ENCODE measurements at regions of chr6 and their contacts with region 1.

Region 1: DNA sequence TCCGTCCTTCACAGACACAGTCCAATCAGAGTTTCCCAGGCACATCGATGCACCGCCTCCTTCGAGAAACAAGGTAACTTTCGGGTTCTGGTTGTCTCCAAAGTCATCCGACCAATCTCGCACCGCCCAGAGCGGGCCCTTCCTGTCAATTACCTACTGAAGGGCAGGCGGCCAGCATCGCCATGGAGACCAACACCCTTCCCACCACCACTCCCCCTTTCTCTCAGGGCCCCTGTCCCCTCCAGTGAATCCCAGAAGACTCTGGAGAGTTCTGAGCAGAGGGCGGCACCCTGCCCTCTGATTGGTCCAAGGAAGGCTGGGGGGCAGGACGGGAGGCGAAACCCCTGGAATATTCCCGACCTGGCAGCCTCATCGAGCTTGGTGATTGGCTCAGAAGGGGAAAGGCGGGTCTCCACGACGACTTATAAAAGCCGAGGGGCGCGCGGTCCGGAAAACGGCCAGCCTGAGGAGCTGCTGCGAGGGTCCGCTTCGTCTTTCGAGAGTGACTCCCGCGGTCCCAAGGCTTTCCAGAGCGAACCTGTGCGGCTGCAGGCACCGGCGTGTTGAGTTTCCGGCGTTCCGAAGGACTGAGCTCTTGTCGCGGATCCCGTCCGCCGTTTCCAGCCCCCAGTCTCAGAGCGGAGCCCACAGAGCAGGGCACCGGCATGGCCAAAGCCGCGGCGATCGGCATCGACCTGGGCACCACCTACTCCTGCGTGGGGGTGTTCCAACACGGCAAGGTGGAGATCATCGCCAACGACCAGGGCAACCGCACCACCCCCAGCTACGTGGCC is at the start of gene HSPA1B:
- DNase-seq: peak; percentile 92
- ATAC-seq: peak; percentile 72
- H3K4me3 ChIP-seq: peak within 1 kb of the TSS; percentile 69 to 93 (median 80)
- H3K4me3 Mint-ChIP-seq: peak within 1 kb of the TSS; percentile 85
- H3K27ac ChIP-seq: peak within 1 kb of the TSS; percentile 87 to 89
- H3K27ac Mint-ChIP-seq: peak within 1 kb of the TSS; percentile 96
- H3K4me1 ChIP-seq: peaks cover 19 to 41% of the 10 kb centered on the region in 2 donors
- H3K4me1 Mint-ChIP-seq: peaks cover 32% of the 10 kb centered on the region
- H3K27me3 ChIP-seq: no peaks in the 10 kb centered on the region
- H3K27me3 Mint-ChIP-seq: no peaks in the 10 kb centered on the region
- CTCF ChIP-seq: no peak
- total RNA-seq, gene HSPA1B: 79.2 and 89.9 TPM in 2 replicates

Region 2: DNA sequence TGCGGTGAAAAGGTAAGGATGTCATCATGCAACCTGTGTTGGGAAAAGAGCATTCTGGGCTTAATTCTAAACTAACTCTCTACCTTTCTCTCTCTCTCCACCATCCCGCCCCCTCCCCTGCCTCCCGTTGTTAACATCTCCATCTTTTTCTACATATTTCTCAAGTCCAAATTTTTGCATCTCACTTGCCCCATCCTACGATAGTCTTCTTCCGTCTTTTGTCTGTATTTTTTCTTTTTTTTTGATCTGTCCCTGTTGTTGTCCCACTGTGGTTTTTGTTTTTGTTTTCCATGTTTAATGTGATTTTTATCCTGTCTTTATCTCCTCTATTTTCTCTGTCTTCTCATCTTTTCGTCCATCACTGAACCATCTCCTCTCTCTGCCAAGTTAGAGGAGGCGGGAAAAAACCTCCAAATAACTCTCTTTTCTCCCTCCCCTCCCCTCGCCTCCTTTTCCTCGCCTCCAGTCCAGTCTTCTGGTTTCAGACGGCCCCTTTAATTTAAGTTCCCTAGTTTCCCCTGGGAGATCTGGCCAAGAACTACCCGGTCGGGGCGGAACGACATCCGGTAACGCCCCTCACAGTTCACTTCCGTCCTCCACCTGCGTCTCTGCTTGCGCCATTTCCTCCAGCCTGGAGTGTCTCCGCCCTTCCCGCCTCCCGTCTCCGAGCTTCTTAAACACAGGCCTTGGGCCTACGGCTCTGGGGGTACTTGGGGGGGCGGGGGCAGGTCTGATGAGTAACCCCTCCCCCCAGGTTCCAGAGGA is 280.3 kb before region 1 on chr6 and contains the start of gene NFKBIL1:
- CTCF ChIA-PET with region 1: interaction called, 21 read pairs
- POLR2A ChIA-PET with region 1: interaction called, 5 read pairs
- intact Hi-C with region 1: loop called (anchors 1 kb)
- DNase-seq: peak; percentile 96
- ATAC-seq: peak; percentile 84
- H3K4me3 ChIP-seq: peak within 1 kb of the TSS; percentile 40 to 69 (median 56)
- H3K4me3 Mint-ChIP-seq: peak within 1 kb of the TSS; percentile 87
- H3K27ac ChIP-seq: peak within 1 kb of the TSS; percentile 80 to 83
- H3K27ac Mint-ChIP-seq: peak within 1 kb of the TSS; percentile 88
- H3K4me1 ChIP-seq: peaks cover 30 to 53% of the 10 kb centered on the region in 2 donors
- H3K4me1 Mint-ChIP-seq: peaks cover 48% of the 10 kb centered on the region
- H3K27me3 ChIP-seq: no peaks in the 10 kb centered on the region
- H3K27me3 Mint-ChIP-seq: no peaks in the 10 kb centered on the region
- CTCF ChIP-seq: peak; percentile 50
- total RNA-seq, gene NFKBIL1: 17.8 and 18.4 TPM in 2 replicates

Region 3: DNA sequence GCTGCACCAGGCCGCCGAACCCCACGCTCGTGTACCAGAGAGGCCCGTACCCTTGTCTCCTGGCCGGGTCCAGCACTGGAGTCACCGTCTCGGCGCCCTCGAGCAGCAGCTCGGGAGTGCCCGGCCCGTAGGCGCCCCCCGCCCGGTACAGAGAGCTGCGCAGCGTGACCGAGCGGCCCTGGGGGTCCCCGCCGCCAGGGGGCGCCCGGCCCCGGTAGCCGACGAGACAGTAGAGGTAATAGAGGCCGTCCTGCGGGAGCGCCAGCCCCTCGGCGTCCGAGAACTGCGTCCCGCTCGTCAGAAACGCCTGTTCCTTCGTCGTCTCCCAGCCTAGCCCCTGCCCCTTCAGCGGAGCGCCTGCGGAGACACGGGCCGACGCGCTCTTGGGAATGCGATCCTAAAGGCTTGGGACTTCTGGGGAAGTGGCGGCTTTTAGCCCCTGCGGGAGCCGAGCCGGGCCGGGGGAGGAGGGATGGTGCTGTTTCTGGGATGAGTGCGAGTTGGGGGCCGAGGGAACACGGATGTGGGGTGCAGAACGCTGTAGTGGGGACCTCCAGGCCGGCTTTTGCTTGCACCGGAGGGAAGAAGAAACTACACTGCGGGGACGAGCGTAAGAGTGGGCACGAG is 246.6 kb before region 1 on chr6:
- CTCF ChIA-PET with region 1: interaction called, 10 read pairs
- POLR2A ChIA-PET with region 1: interaction called, 10 read pairs
- intact Hi-C with region 1: no loop called
- DNase-seq: peak; percentile 89
- ATAC-seq: peak; percentile 62
- H3K4me3 ChIP-seq: peak overlapping the region; percentile 83 to 100 (median 96)
- H3K4me3 Mint-ChIP-seq: peak overlapping the region; percentile 98
- H3K27ac ChIP-seq: peak overlapping the region; percentile 95 to 97
- H3K27ac Mint-ChIP-seq: peak overlapping the region; percentile 99
- H3K4me1 ChIP-seq: peaks cover 71 to 83% of the 10 kb centered on the region in 2 donors
- H3K4me1 Mint-ChIP-seq: peaks cover 82% of the 10 kb centered on the region
- H3K27me3 ChIP-seq: no peaks in the 10 kb centered on the region
- H3K27me3 Mint-ChIP-seq: no peaks in the 10 kb centered on the region
- CTCF ChIP-seq: peak; percentile 99

Region 4: GRCh38 chr6:31680840-31681671 is 146.4 kb before region 1 on chr6 and contains the start of gene LY6G5C:
- CTCF ChIA-PET with region 1: interaction called, 57 read pairs
- POLR2A ChIA-PET with region 1: interaction called, 10 read pairs
- intact Hi-C with region 1: loop called (anchors 1 kb)
- DNase-seq: peak; percentile 79
- ATAC-seq: peak; percentile 78
- H3K4me3 ChIP-seq: peak within 1 kb of the TSS; percentile 44 to 69 (median 53)
- H3K4me3 Mint-ChIP-seq: peak within 1 kb of the TSS; percentile 88
- H3K27ac ChIP-seq: peak within 1 kb of the TSS in 1 of 2 donors; percentile 50
- H3K27ac Mint-ChIP-seq: peak within 1 kb of the TSS; percentile 57
- H3K4me1 ChIP-seq: peaks cover 19 to 40% of the 10 kb centered on the region in 2 donors
- H3K4me1 Mint-ChIP-seq: peaks cover 43% of the 10 kb centered on the region
- H3K27me3 ChIP-seq: no peaks in the 10 kb centered on the region
- H3K27me3 Mint-ChIP-seq: no peaks in the 10 kb centered on the region
- CTCF ChIP-seq: peak; percentile 55
- total RNA-seq, gene LY6G5C: 0.76 and 2.1 TPM in 2 replicates

Region 5: GRCh38 chr6:31729515-31729978 is 97.9 kb before region 1 on chr6:
- CTCF ChIA-PET with region 1: interaction called, 75 read pairs
- POLR2A ChIA-PET with region 1: interaction called, 36 read pairs
- intact Hi-C with region 1: loop called (anchors 1 kb)
- DNase-seq: peak; percentile 90
- ATAC-seq: peak; percentile 48
- H3K4me3 ChIP-seq: peak overlapping the region; percentile 67 to 94 (median 85)
- H3K4me3 Mint-ChIP-seq: peak overlapping the region; percentile 99
- H3K27ac ChIP-seq: peak overlapping the region; percentile 78 to 82
- H3K27ac Mint-ChIP-seq: peak overlapping the region; percentile 97
- H3K4me1 ChIP-seq: peaks cover 49 to 58% of the 10 kb centered on the region in 2 donors
- H3K4me1 Mint-ChIP-seq: peaks cover 72% of the 10 kb centered on the region
- H3K27me3 ChIP-seq: no peaks in the 10 kb centered on the region
- H3K27me3 Mint-ChIP-seq: no peaks in the 10 kb centered on the region
- CTCF ChIP-seq: peak; percentile 89

Region 6: GRCh38 chr6:31795616-31796298 is 31.7 kb before region 1 on chr6 and contains the start of gene VARS1:
- CTCF ChIA-PET with region 1: interaction called, 6 read pairs
- POLR2A ChIA-PET with region 1: interaction called, 15 read pairs
- intact Hi-C with region 1: no loop called
- DNase-seq: peak; percentile 96
- ATAC-seq: peak; percentile 91
- H3K4me3 ChIP-seq: peak within 1 kb of the TSS; percentile 72 to 96 (median 95)
- H3K4me3 Mint-ChIP-seq: peak within 1 kb of the TSS; percentile 97
- H3K27ac ChIP-seq: peak within 1 kb of the TSS; percentile 75 to 87
- H3K27ac Mint-ChIP-seq: peak within 1 kb of the TSS; percentile 99
- H3K4me1 ChIP-seq: peaks cover 45 to 59% of the 10 kb centered on the region in 2 donors
- H3K4me1 Mint-ChIP-seq: peaks cover 54% of the 10 kb centered on the region
- H3K27me3 ChIP-seq: no peaks in the 10 kb centered on the region
- H3K27me3 Mint-ChIP-seq: no peaks in the 10 kb centered on the region
- CTCF ChIP-seq: peak; percentile 79
- total RNA-seq, gene VARS1: 47.4 and 52.3 TPM in 2 replicates

Region 7: GRCh38 chr6:31862344-31863227 is 35.1 kb after region 1 on chr6 and contains the start of gene NEU1:
- CTCF ChIA-PET with region 1: interaction called, 29 read pairs
- POLR2A ChIA-PET with region 1: interaction called, 10 read pairs
- intact Hi-C with region 1: no loop called
- DNase-seq: peak; percentile 100
- ATAC-seq: peak; percentile 90
- H3K4me3 ChIP-seq: peak within 1 kb of the TSS; percentile 69 to 92 (median 85)
- H3K4me3 Mint-ChIP-seq: peak within 1 kb of the TSS; percentile 94
- H3K27ac ChIP-seq: peak within 1 kb of the TSS; percentile 77 to 91
- H3K27ac Mint-ChIP-seq: peak within 1 kb of the TSS; percentile 92
- H3K4me1 ChIP-seq: peaks cover 18 to 23% of the 10 kb centered on the region in 2 donors
- H3K4me1 Mint-ChIP-seq: peaks cover 24% of the 10 kb centered on the region
- H3K27me3 ChIP-seq: no peaks in the 10 kb centered on the region
- H3K27me3 Mint-ChIP-seq: no peaks in the 10 kb centered on the region
- CTCF ChIP-seq: no peak
- total RNA-seq, gene NEU1: 25.3 and 26.0 TPM in 2 replicates

Region 8: DNA sequence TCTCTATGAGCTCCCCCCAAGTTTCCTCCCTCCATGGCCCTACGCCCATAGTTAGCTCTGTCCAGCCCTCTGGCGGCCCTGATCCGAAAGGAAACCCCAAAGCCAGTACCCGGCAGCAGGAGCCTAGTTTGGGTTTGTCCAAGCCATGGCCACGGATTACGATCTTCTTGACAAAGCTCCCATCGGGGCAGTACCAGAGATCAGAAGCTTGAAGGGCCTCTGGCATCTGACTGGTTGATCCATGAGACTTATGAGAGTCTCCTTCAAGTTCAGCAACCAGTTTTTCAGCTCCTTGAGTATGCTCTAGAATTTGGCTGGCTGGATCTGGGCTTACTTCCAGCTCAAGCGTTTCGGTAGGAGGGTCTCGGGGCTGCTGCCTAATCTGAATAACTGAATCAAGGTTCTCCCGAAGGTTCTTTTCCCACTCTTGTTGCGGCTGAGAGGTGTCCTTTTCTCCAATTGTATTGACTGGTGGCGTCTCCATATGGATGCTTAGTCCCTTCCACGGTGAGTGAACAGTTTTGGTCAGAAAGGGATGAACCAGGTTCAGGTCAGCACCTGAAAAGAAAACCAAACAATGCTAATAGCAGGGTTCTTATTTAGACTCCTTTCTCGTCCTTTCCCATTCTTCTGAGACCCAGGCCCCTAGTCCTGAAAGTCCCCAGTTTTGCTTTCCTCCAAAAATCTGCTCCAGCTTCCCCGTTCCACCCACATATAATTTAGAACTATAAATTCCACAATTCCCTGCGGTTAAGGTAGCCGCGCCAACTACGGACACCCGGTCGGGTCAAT is 302.0 kb after region 1 on chr6:
- CTCF ChIA-PET with region 1: no interaction called
- POLR2A ChIA-PET with region 1: no interaction called
- intact Hi-C with region 1: no loop called
- DNase-seq: no peak
- ATAC-seq: no peak
- H3K4me3 ChIP-seq: peak overlapping the region; percentile 14 to 87 (median 80)
- H3K4me3 Mint-ChIP-seq: peak overlapping the region; percentile 94
- H3K27ac ChIP-seq: peak overlapping the region; percentile 46 to 87
- H3K27ac Mint-ChIP-seq: peak overlapping the region; percentile 89
- H3K4me1 ChIP-seq: peaks cover 26 to 36% of the 10 kb centered on the region in 2 donors
- H3K4me1 Mint-ChIP-seq: peaks cover 41% of the 10 kb centered on the region
- H3K27me3 ChIP-seq: no peaks in the 10 kb centered on the region
- H3K27me3 Mint-ChIP-seq: peaks cover 7% of the 10 kb centered on the region
- CTCF ChIP-seq: no peak

Measured in B cell (primary cell).